HEK293 (cell line): ENCODE measurements at regions of chr19 and their contacts with region 1.

Region 1: GRCh38 chr19:46076951-46077816 is 36.4 kb upstream of the IGFL4 start:
- H3K4me3 ChIP-seq: peak overlapping the region; percentile 47
- H3K27ac ChIP-seq: no peak overlapping the region; the same call in 1 of the 2 replicates
- H3K4me1 ChIP-seq: peaks cover 5% of the 10 kb centered on the region
- CTCF ChIP-seq: peak; percentile 99

Region 2: DNA sequence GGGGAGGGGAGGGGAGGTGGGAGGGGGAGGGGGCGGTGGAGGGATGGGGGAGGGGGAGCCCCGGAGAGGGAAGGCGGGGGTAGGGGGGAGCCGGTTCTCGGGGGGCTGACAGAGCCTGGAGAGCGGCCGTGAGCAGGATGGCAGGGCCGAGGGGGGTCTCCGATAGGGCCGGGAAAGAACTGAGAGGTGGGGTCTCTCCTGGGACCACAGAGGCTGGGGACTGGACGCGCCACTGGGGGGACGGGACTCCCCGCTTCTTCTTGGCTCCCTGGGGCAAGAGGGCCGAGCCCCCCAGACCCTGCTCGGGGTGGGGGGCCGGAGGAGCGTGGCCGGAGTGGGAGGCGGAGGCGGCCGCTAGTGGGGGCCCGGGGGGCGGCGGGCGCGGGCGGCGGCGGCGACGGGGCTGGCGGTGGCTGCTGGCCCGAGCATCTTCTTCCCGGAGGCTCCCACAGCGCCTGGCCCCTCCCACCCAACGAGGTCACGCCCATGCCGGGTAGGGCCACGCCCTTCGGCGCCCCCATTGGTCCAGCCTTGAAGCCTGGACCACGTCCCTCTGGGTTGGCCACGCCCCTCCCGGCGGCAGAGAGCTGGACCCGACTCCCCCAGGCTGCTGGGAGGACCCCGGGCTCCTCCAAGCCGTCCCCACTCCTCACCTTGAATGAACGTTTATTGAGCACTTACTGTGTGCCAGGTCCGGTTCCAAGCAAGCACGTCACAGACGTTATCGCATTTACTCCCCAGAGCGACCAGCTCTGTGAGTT is 103.4 kb before region 1 on chr19 and contains the start of gene NOVA2:
- CTCF ChIA-PET with region 1: no interaction called
- POLR2A ChIA-PET with region 1: no interaction called
- H3K4me3 ChIP-seq: peak within 1 kb of the TSS; percentile 49
- H3K27ac ChIP-seq: no peak within 1 kb of the TSS
- H3K4me1 ChIP-seq: no peaks in the 10 kb centered on the region
- CTCF ChIP-seq: no peak

Region 3: DNA sequence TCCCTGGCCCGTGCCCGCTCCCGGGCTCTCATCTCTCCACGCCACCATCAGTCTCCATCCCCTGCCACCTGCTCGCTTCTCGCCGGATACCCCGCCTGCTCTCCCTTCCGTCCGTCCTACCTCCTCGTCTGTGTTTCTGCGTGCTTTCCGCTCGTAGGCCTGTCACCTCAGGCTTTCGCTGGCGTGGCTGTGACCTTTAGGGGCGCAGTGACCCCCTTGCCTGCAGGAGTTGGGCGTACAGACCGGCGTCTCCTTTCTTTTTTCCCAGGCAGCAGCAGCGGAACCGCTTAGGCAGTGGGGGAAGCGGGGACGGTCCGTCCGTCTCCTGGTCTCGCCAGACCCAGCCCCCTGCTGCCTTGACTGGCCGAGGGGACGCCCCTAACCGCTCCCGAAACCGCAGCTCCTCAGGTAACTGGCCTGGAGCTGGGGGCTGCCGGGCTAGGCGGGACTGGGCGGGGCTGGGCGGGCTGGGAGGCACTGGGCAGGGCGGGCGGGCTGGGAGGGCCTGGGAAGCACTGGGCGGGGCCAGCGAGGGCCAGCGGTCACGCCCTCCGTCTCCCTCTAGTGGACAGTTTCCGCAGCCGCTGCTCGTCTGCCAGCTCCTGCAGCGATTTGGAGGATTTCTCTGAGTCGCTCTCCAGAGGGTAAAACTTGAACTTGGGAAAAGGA is 60.6 kb before region 1 on chr19:
- CTCF ChIA-PET with region 1: interaction called, 625 read pairs
- POLR2A ChIA-PET with region 1: interaction called, 5 read pairs
- H3K4me3 ChIP-seq: peak overlapping the region; percentile 35
- H3K27ac ChIP-seq: no peak overlapping the region
- H3K4me1 ChIP-seq: no peaks in the 10 kb centered on the region; the same call in 1 of the 2 replicates
- CTCF ChIP-seq: peak; percentile 33; the same call in 1 of the 2 replicates

Region 4: DNA sequence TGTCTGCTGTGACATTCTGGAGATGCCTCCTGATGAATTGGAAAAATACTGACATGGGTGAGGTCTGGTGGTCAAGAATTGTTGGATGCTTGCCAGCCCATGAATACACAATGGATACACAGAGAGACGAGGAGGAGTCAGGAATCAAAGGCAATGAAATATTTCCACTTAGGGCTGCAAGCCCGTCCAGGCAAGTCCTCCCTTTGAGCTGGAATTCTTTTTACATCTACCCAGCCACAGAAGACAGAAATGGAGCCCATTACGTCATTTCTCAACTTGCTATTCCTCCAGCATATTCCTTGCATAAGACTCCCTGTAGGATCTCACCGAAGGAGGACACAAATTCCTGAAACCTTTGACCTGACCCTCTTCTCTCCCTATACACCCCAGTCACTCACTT is 20.6 kb before region 1 on chr19:
- CTCF ChIA-PET with region 1: interaction called, 59 read pairs
- POLR2A ChIA-PET with region 1: interaction called, 4 read pairs
- H3K4me3 ChIP-seq: no peak overlapping the region
- H3K27ac ChIP-seq: no peak overlapping the region
- H3K4me1 ChIP-seq: peaks cover 8% of the 10 kb centered on the region
- CTCF ChIP-seq: no peak

Region 5: DNA sequence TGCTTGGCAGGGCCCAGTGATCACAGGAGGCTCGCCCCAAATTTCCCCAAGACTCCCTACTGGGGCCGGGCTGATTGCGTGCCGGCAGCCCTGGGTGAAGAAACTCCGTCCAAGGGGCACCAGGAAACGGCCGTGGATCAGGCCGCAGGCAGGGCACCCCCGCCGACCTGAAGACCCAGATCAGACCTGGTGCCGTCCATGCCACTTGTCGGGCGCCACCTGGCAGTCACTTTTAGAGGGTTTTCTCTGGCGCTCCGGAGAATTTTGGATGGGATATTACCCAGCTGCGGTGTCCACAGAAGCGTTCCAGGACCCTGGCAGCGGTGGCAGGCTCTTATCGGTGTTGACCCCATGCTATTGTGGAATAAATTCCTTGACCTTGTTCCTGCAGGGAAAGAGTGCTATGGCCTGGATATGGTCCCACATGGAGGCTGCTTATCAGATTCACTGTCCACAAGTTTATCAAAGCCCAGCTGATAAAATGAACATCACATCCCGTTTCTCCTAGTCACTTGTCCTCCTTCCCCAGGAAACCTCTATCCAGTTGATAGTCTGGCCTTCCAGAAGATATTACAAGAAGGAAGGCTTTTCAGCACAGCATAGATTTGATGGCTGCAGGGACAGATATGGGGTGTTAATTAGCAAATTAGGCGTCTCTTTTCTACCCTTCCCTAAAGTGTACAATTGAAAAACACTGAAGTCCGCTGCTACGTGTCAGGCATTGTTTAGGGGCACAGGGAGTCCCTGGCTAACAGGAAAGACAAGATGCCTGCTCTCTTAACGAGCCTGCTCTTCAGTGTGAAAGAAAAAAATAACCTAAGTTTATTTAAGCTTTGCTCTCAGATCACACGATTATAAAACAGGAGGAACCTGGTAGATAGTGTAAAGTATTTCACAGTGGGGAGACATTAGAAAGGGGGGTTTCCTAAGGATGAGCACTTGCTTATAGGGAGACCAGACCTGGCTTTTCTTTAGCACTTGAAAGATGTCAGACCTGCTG is 109.2 kb after region 1 on chr19:
- CTCF ChIA-PET with region 1: interaction called, 256 read pairs
- POLR2A ChIA-PET with region 1: no interaction called
- H3K4me3 ChIP-seq: no peak overlapping the region
- H3K27ac ChIP-seq: no peak overlapping the region
- H3K4me1 ChIP-seq: no peaks in the 10 kb centered on the region
- CTCF ChIP-seq: no peak

Region 6: DNA sequence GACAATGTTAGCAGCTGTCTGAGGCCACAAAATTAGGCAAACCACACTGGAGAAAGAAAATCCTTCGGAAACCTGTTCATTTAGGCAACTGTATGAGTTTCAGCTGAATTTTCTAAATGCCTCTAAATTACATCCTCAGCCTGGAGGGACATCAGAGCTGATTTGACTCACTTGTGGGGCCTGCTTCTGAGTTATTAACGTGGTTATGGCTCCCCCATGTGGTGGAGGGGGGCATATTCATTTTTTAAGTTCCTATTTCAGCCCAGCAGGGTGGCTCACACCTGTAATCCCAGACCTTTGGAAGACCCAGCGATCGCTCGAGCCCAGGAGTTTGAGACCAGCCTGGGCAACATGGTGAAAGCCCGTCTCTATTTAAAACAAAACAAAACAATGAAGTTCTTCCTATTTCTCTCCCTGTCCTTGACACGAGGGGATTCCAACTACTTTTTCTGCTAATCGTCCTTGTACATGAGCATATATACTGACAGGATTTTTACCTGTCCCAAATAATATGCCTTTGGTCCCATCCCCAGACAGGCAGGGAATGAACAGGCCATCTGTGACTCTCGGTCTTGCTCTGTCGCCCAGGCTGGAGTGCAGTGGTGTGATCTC is 188.1 kb after region 1 on chr19:
- CTCF ChIA-PET with region 1: interaction called, 431 read pairs
- POLR2A ChIA-PET with region 1: interaction called, 5 read pairs
- H3K4me3 ChIP-seq: no peak overlapping the region
- H3K27ac ChIP-seq: no peak overlapping the region
- H3K4me1 ChIP-seq: peaks cover 4% of the 10 kb centered on the region; the same call in 1 of the 2 replicates
- CTCF ChIP-seq: peak; percentile 88

Region 7: GRCh38 chr19:46513461-46514236 is 436.5 kb after region 1 on chr19:
- CTCF ChIA-PET with region 1: interaction called, 32 read pairs
- POLR2A ChIA-PET with region 1: no interaction called
- H3K4me3 ChIP-seq: no peak overlapping the region
- H3K27ac ChIP-seq: no peak overlapping the region
- H3K4me1 ChIP-seq: no peaks in the 10 kb centered on the region
- CTCF ChIP-seq: peak; percentile 88